IMR-90 (cell line): ENCODE measurements at regions of chr1 and their contacts with region 1.

Region 1: DNA sequence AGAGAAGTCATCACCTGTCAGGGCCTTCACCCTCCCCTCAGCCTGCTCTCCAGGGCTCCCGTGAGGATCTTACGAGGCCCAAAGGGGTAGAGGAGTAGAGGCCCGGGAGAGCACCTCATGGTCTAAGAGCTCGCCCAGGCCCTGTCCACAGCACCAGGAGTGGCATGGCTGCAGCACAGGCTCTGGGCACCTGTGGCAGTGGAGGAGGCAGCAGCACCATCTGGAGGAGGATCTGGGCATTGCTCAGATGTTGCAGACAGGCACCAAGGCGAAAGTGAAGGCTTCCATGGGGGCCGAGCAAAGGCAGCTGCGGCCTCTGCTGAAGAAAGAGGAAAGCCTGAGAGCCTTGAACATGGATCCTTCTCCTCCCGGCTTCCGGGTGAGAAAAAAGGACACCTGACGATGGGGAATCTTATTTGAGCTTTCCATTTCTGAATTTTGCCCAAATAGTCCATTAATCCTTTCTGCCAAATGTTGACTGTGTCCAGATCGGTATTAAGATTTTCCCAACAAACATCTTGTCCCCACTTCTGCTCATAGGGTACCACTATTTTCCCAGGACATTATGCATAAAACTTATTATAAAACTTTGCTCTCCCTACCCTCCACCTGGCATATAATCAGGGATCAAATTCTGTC is 604.7 kb downstream of the PTPRC start:
- DNase-seq: peak; percentile 43
- ATAC-seq: peak; percentile 85
- H3K4me3 ChIP-seq: no peak overlapping the region
- H3K27ac ChIP-seq: no peak overlapping the region
- H3K4me1 ChIP-seq: no peaks in the 10 kb centered on the region
- H3K27me3 ChIP-seq: no peaks in the 10 kb centered on the region
- CTCF ChIP-seq: peak; percentile 64
- POLR2A ChIP-seq: no peak
- RAD21 ChIP-seq: peak; percentile 79

Region 2: DNA sequence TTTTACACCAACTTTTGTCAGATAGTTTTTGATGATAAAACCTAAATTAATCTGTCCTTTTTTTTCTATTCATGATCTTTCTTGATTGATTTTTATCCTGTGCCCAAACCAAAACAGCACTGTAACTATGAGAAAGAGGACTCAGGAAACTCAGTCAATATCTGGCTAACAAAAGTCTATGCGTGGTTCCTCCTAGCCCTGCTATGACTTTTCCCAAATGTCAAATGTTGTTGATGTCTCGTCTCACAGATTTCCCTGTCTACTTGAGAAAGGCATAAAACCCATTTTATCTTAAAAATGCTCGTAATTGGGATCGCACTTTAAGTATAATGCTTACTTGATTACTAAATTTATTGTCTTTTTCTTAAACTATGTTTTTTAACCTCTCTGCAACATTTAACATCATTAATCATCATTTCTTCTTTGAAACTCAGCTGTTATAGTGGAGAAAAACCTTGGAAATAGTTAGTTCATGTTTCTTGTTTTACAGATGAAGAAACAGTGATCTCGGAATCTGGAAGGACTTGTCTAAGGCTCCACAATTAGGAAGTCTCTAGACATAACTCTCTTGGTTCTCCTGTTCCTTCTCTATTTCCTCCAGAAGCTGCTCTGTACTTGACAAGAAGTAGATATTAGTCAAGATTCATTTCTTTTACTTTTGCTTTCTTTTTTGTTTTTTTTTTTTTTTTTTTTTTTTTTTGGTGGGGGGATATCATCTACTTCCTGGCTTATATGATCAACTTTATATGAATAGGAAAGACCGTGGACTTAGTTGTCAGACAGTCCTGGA is 630.9 kb before region 1 on chr1:
- CTCF ChIA-PET with region 1: no interaction called
- POLR2A ChIA-PET with region 1: no interaction called
- dilution Hi-C with region 1: no loop called
- in situ Hi-C with region 1: no loop called
- intact Hi-C with region 1: no loop called
- DNase-seq: no peak
- ATAC-seq: no peak
- H3K4me3 ChIP-seq: no peak overlapping the region
- H3K27ac ChIP-seq: no peak overlapping the region
- H3K4me1 ChIP-seq: no peaks in the 10 kb centered on the region; the same call in 1 of the 2 replicates
- H3K27me3 ChIP-seq: no peaks in the 10 kb centered on the region
- CTCF ChIP-seq: no peak
- POLR2A ChIP-seq: no peak
- RAD21 ChIP-seq: no peak

Region 3: DNA sequence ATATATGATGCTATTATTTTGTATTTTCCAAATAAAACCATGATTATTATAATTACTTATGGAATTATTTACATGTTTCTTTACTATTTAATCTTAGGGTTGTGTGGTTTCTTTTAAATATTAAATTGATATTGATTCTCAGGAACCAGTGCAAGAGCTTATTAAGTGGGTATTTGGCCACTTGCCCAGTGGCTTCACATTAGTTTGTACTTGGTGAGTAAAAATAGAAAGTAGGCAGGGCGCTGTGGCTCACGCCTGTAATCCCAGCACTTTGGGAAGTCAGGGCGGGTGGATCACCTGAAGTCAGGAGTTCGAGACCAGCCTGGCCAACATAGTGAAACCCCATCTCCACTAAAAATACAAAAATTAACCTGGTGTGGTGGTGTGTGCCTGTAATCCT is 107.6 kb before region 1 on chr1:
- CTCF ChIA-PET with region 1: no interaction called
- POLR2A ChIA-PET with region 1: no interaction called
- dilution Hi-C with region 1: no loop called
- in situ Hi-C with region 1: no loop called
- intact Hi-C with region 1: loop called (anchors 5 kb)
- DNase-seq: no peak
- ATAC-seq: no peak
- H3K4me3 ChIP-seq: no peak overlapping the region
- H3K27ac ChIP-seq: no peak overlapping the region
- H3K4me1 ChIP-seq: no peaks in the 10 kb centered on the region
- H3K27me3 ChIP-seq: no peaks in the 10 kb centered on the region
- CTCF ChIP-seq: no peak
- POLR2A ChIP-seq: no peak
- RAD21 ChIP-seq: no peak